Gastrocnemius medialis (tissue), 4 donors: ENCODE measurements at regions of chr11 and their contacts with region 1.

Region 1: DNA sequence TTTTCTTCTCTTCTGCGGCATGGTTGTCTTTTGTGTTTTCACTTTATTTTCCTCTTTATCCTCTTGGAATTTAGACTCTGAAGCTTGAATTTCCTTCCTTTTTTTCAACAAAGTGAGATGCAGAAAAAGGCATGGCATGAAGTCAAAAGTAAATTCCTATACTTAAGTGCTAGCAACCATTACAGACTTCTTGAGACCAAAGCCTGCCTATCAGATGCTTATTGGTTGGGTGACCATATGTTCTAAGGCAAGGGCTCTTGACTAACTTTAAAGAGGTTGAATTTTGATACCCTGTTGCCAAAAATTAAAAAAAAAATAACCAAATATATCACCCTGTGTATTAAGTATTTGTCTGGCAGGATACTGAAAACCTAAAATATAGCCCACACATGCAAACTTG is 237.4 kb downstream of the TMEM135 start:
- DNase-seq: no peak
- ATAC-seq: no peak
- H3K4me3 ChIP-seq: no peak overlapping the region
- H3K27ac ChIP-seq: no peak overlapping the region
- H3K4me1 ChIP-seq: peaks cover 2 to 8% of the 10 kb centered on the region in 2 donors
- H3K27me3 ChIP-seq: no peaks in the 10 kb centered on the region
- CTCF ChIP-seq: no peak
- POLR2A ChIP-seq: no peak

Region 2: GRCh38 chr11:86938900-86939880 is 336.0 kb before region 1 on chr11:
- in situ Hi-C with region 1: loop called in 1 of 4 experiments (anchors 5 kb)
- intact Hi-C with region 1: no loop called
- DNase-seq: no peak
- ATAC-seq: peak in 1 of 2 donors; percentile 33
- H3K4me3 ChIP-seq: peak overlapping the region in 2 of 4 donors; percentile 40 to 54
- H3K27ac ChIP-seq: peak overlapping the region; percentile 74 to 85 (median 82)
- H3K4me1 ChIP-seq: peaks cover 47 to 50% of the 10 kb centered on the region in 2 donors
- H3K27me3 ChIP-seq: no peaks in the 10 kb centered on the region
- CTCF ChIP-seq: peak; percentile 63 to 77 (median 68)
- POLR2A ChIP-seq: no peak

Region 3: GRCh38 chr11:87092159-87092558 is 183.0 kb before region 1 on chr11:
- in situ Hi-C with region 1: no loop called
- intact Hi-C with region 1: no loop called
- DNase-seq: no peak
- ATAC-seq: no peak
- H3K4me3 ChIP-seq: no peak overlapping the region
- H3K27ac ChIP-seq: no peak overlapping the region
- H3K4me1 ChIP-seq: peaks cover 6 to 11% of the 10 kb centered on the region in 2 donors
- H3K27me3 ChIP-seq: no peaks in the 10 kb centered on the region
- CTCF ChIP-seq: no peak
- POLR2A ChIP-seq: no peak